Endothelial cell of umbilical vein (primary cell): ENCODE measurements at regions of chr19 and their contacts with region 1.

Region 1: DNA sequence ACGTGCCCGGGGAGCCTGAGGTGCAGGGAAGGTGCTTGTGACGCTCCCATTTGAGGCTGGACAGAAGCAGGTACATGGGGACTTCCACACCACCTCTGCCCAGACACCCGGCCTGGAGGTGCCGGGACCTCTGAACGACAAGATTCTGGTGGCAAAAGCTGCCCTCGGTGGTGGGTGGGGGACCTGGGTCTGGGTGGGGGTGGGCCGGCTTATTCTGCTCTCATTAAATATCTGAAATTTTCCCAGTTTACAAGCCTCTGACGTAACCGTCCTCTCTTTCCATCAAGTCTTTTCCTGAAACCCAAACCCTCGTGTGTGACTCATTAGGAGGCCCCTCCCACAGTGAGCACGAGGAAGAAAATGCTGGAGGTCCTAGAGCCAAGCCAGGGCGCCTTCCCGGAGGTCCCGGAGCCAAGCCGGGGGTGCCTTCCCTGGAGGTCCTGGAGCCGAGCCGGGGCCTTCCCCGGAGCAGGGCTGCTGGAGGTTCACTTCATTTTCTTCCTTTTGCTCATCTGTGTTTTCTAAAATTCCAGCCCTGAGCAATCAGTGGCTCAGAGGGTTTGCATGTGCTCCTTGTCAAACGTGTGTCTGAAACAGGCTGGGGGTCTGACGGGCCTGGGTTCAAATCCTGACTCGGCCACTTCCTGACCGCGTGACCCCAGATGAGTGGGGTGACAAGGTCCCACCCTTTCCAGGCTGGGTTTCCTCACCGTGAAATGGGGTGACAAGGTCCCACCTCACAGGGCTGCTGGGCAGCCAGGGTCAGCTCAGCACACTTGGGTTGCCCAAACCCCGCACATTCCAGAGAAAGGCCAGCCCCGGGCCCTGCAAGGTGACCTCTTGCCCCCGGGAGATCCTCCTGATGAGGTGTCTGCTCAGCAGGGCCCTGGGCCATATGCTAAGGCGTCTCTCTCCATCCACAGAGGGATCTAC is 10.0 kb downstream of the CFD start:
- DNase-seq: peak; percentile 88
- H3K4me3 ChIP-seq: no peak overlapping the region
- H3K27ac ChIP-seq: peak overlapping the region; percentile 44
- H3K4me1 ChIP-seq: peaks cover 9% of the 10 kb centered on the region
- H3K27me3 ChIP-seq: no peaks in the 10 kb centered on the region
- CTCF ChIP-seq: no peak
- POLR2A ChIP-seq: no peak

Region 2: GRCh38 chr19:662962-663681 is 206.4 kb before region 1 on chr19 and contains the start of gene RNF126:
- CTCF ChIA-PET with region 1: no interaction called
- POLR2A ChIA-PET with region 1: no interaction called
- dilution Hi-C with region 1: no loop called
- intact Hi-C with region 1: loop called (anchors 1 kb)
- DNase-seq: peak; percentile 89
- H3K4me3 ChIP-seq: peak within 1 kb of the TSS; percentile 73 to 89 (median 86)
- H3K27ac ChIP-seq: peak within 1 kb of the TSS; percentile 60
- H3K4me1 ChIP-seq: peaks cover 19% of the 10 kb centered on the region
- H3K27me3 ChIP-seq: no peaks in the 10 kb centered on the region
- CTCF ChIP-seq: no peak
- POLR2A ChIP-seq: peak; percentile 88
- total RNA-seq, gene RNF126: 58.4 and 61.3 TPM in 2 replicates

Region 3: DNA sequence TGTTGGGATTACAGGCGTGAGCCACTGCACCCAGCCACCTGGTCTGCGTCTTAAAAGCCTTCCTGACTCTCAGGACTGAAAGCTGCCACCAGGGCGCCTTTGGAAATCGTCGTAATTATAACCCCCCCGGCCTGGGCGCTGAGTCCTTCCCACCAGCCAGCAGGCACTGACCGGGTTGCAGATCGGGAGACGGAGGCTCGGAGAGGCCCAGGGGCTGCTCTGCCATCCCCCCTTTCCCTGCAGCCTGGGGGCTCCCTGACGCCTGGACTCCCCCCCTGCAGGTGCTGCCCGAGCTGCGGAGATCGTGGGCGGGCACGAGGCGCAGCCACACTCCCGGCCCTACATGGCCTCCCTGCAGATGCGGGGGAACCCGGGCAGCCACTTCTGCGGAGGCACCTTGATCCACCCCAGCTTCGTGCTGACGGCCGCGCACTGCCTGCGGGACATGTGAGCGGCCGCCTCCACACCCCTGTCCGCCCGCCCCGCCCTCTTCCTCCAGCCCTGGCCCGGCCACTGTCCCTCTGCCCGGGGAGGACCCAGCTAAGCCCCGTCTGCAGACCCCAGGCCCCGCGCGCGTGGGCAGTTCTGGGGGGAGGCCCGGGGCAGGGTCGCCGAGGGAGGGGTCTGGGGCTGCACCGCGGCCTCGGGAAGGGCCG is 26.2 kb before region 1 on chr19:
- CTCF ChIA-PET with region 1: no interaction called
- POLR2A ChIA-PET with region 1: no interaction called
- dilution Hi-C with region 1: no loop called
- intact Hi-C with region 1: no loop called
- DNase-seq: no peak
- H3K4me3 ChIP-seq: no peak overlapping the region
- H3K27ac ChIP-seq: no peak overlapping the region
- H3K4me1 ChIP-seq: no peaks in the 10 kb centered on the region
- H3K27me3 ChIP-seq: peaks cover 0 to 6% of the 10 kb centered on the region in 2 experiments
- CTCF ChIP-seq: no peak
- POLR2A ChIP-seq: no peak